ENCODE measurements at regions of chr7 and their contacts with region 1.

Region 1: DNA sequence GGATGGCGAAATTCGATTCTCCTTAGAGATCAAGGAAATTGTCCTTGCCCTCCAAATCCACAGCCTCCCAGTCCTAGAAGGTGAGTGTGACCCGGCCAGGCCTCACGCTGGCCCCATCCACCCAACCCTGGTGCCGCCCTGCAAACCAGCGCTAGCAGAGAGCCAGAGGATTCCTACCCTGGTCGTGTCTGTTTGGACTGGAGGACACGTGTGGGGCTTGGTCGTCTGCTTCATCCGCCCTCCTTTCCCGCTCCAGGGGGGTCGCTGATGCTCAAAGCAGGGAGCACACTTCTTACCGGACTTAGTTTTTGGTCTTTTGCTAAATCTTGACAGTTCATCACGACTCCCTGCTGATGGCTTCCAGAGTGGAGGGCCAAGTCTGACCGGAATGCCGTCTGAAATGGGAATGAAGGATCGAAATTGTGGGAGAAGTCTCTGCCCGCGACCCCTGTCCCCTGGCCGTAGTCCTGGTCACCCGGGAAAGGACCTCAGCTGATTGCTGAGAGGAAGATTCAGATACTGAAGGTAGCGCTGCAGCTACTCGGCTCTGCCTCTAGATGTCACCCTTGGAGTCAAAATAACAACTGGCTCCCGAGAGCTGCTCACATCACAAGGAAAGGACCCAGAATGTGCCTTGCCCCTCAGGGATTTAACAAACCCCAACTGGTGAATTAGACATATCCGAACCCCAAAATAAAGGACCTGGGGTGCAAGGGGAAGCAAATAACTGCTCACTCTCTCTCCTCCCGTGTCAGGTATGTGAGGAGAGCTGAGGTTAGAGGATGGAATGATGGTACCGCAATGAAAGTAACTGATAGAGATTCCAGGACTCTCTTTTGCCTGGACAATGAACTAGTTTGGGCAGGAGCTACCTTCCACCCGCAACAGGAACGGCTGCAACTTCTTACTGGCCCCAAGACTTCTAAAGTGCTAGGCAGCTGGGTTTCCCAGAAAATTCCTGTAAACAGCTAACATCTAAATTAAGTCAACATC is 23.5 kb upstream of the ORC5 start:
- DNase-seq: peak; percentile 56 to 63
- ATAC-seq: peak; percentile 97 to 99
- H3K4me3 ChIP-seq: no peak overlapping the region
- H3K27ac ChIP-seq: no peak overlapping the region
- H3K4me1 ChIP-seq: no peaks in the 10 kb centered on the region
- CTCF ChIP-seq: peak; percentile 73
- EP300 ChIP-seq: no peak
- POLR2A ChIP-seq: no peak
- RAD21 ChIP-seq: peak; percentile 78 to 81

Region 2: DNA sequence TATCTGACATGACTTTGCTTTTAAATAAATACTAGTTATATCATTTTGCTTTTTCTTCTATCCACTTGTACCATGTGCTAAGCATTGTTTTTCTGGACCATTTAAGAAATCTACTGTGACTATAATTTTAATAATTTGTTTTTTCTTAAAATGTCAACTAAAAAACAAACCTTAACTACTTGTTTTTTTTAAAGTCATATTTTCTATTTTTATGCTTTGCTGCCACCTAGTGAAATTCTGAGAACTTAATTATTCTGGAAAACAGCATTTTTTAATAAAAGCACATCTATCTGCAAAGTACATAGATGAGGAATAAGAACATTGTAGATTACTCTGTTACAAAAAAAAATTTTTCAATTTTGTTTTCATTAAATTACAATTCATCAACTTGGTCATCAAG is 71.0 kb before region 1 on chr7:
- CTCF ChIA-PET with region 1: no interaction called
- POLR2A ChIA-PET with region 1: no interaction called
- DNase-seq: peak in 1 of 2 experiments; percentile 10
- ATAC-seq: no peak
- H3K4me3 ChIP-seq: no peak overlapping the region
- H3K27ac ChIP-seq: no peak overlapping the region
- H3K4me1 ChIP-seq: no peaks in the 10 kb centered on the region
- CTCF ChIP-seq: no peak; the same call in 1 of the 3 replicates
- EP300 ChIP-seq: no peak
- POLR2A ChIP-seq: no peak
- RAD21 ChIP-seq: peak; percentile 37 to 61

Region 3: GRCh38 chr7:104252404-104253134 is 21.2 kb after region 1 on chr7:
- CTCF ChIA-PET with region 1: interaction called, 17 read pairs
- POLR2A ChIA-PET with region 1: no interaction called
- DNase-seq: peak; percentile 18 to 35
- ATAC-seq: peak; percentile 86 to 89
- H3K4me3 ChIP-seq: no peak overlapping the region
- H3K27ac ChIP-seq: no peak overlapping the region
- H3K4me1 ChIP-seq: no peaks in the 10 kb centered on the region
- CTCF ChIP-seq: 0 out of 3 replicates have a peak, but pooled peaks have one; percentile 9
- EP300 ChIP-seq: no peak
- POLR2A ChIP-seq: no peak
- RAD21 ChIP-seq: 0 out of 5 replicates have a peak, but pooled peaks of 1 of the 2 experiments have one; percentile 20

Region 4: GRCh38 chr7:104267701-104268368 is 36.5 kb after region 1 on chr7:
- CTCF ChIA-PET with region 1: interaction called, 16 read pairs
- POLR2A ChIA-PET with region 1: no interaction called
- DNase-seq: peak; percentile 4 to 12
- ATAC-seq: no peak
- H3K4me3 ChIP-seq: no peak overlapping the region
- H3K27ac ChIP-seq: no peak overlapping the region
- H3K4me1 ChIP-seq: no peaks in the 10 kb centered on the region
- CTCF ChIP-seq: peak; percentile 32; the same call in 2 of the 3 replicates
- EP300 ChIP-seq: no peak
- POLR2A ChIP-seq: no peak
- RAD21 ChIP-seq: 0 out of 5 replicates have a peak, but pooled peaks of 1 of the 2 experiments have one; percentile 18

Region 5: DNA sequence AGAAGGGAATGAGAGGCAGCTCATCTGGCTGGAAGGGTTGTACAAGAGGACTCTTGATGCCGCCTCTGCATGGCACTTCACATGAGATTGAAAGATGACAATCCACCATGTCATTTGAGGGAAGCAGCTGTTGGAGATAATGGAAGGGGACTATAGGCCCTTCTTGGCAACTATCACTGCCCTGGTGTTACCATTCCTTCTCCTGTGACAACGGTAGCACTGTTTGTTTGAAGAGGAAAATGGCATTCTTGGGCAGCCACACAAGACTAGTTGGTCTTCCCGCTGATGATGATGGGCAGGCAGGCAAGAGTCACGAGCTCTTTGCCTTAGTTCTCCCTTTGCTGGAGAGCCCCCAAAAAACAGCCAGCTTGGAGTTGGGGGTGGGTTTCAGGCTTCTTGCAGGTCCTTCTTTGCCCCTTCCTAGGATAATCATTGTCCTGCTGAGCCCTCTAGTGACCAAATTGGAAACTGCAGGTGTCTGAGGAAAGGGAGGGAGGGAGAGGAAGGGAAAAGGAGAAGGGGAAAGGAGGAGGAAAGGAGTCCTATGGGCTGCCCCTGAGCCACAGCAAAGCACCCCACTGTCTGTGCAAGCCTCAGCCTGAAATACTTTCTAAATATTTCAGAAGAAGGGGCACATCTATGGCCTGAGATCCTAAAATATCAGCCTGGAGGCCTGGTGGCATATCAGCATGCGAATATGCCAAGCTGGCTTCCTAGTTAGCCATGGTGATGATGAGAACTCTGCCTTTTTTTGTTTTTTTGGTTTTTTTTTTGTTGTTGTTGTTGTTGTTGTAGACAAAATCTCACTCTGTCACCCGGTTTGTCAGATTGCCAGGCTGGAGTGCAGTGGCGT is 617.0 kb after region 1 on chr7:
- CTCF ChIA-PET with region 1: interaction called, 43 read pairs
- POLR2A ChIA-PET with region 1: no interaction called
- DNase-seq: peak; percentile 38 to 49
- ATAC-seq: peak; percentile 83 to 90
- H3K4me3 ChIP-seq: no peak overlapping the region
- H3K27ac ChIP-seq: no peak overlapping the region
- H3K4me1 ChIP-seq: no peaks in the 10 kb centered on the region
- CTCF ChIP-seq: peak; percentile 80
- EP300 ChIP-seq: no peak
- POLR2A ChIP-seq: no peak
- RAD21 ChIP-seq: peak; percentile 82 to 89

Region 6: GRCh38 chr7:104862719-104863118 is 631.4 kb after region 1 on chr7:
- CTCF ChIA-PET with region 1: interaction called, 25 read pairs
- POLR2A ChIA-PET with region 1: no interaction called
- DNase-seq: peak; percentile 42 to 50
- ATAC-seq: peak; percentile 92 to 96
- H3K4me3 ChIP-seq: no peak overlapping the region
- H3K27ac ChIP-seq: no peak overlapping the region
- H3K4me1 ChIP-seq: no peaks in the 10 kb centered on the region
- CTCF ChIP-seq: peak; percentile 35
- EP300 ChIP-seq: no peak
- POLR2A ChIP-seq: no peak
- RAD21 ChIP-seq: peak; percentile 14 to 30; a peak in 1 of 5 replicates

Region 7: GRCh38 chr7:104914421-104914820 is 683.1 kb after region 1 on chr7:
- CTCF ChIA-PET with region 1: interaction called, 22 read pairs
- POLR2A ChIA-PET with region 1: no interaction called
- DNase-seq: no peak
- ATAC-seq: peak in 1 of 2 experiments; percentile 29; a peak in 1 of 6 replicates
- H3K4me3 ChIP-seq: no peak overlapping the region
- H3K27ac ChIP-seq: no peak overlapping the region
- H3K4me1 ChIP-seq: no peaks in the 10 kb centered on the region
- CTCF ChIP-seq: no peak
- EP300 ChIP-seq: no peak
- POLR2A ChIP-seq: no peak
- RAD21 ChIP-seq: no peak

Region 8: GRCh38 chr7:104923010-104923421 is 691.7 kb after region 1 on chr7:
- CTCF ChIA-PET with region 1: interaction called, 22 read pairs
- POLR2A ChIA-PET with region 1: no interaction called
- DNase-seq: peak; percentile 45 to 85
- ATAC-seq: peak; percentile 86 to 94
- H3K4me3 ChIP-seq: no peak overlapping the region
- H3K27ac ChIP-seq: no peak overlapping the region
- H3K4me1 ChIP-seq: no peaks in the 10 kb centered on the region
- CTCF ChIP-seq: peak; percentile 70
- EP300 ChIP-seq: no peak
- POLR2A ChIP-seq: no peak
- RAD21 ChIP-seq: peak; percentile 84 to 94

Measured in A549 (cell line).